Mammary epithelial cell (primary cell): ENCODE measurements at regions of chr14 and their contacts with region 1.

Region 1: GRCh38 chr14:80055667-80056496 is 155.4 kb downstream of the DIO2 start:
- DNase-seq: peak; percentile 32
- H3K4me3 ChIP-seq: no peak overlapping the region
- H3K27ac ChIP-seq: no peak overlapping the region
- H3K4me1 ChIP-seq: no peaks in the 10 kb centered on the region
- H3K27me3 ChIP-seq: no peaks in the 10 kb centered on the region
- CTCF ChIP-seq: peak; percentile 65 to 81

Region 2: GRCh38 chr14:78967110-78967809 is 1088.6 kb before region 1 on chr14:
- CTCF ChIA-PET with region 1: no interaction called
- dilution Hi-C with region 1: no loop called
- in situ Hi-C with region 1: no loop called
- intact Hi-C with region 1: loop called (anchors 5 kb)
- DNase-seq: no peak
- H3K4me3 ChIP-seq: no peak overlapping the region
- H3K27ac ChIP-seq: no peak overlapping the region
- H3K4me1 ChIP-seq: no peaks in the 10 kb centered on the region
- H3K27me3 ChIP-seq: no peaks in the 10 kb centered on the region
- CTCF ChIP-seq: no peak

Region 3: GRCh38 chr14:80213599-80213998 is 157.7 kb after region 1 on chr14:
- CTCF ChIA-PET with region 1: no interaction called
- dilution Hi-C with region 1: no loop called
- in situ Hi-C with region 1: no loop called
- intact Hi-C with region 1: loop called (anchors 1 kb)
- DNase-seq: peak; percentile 50
- H3K4me3 ChIP-seq: no peak overlapping the region
- H3K27ac ChIP-seq: no peak overlapping the region
- H3K4me1 ChIP-seq: no peaks in the 10 kb centered on the region
- H3K27me3 ChIP-seq: peaks cover 2% of the 10 kb centered on the region
- CTCF ChIP-seq: peak; percentile 81 to 82

Region 4: GRCh38 chr14:80364274-80364673 is 308.4 kb after region 1 on chr14:
- CTCF ChIA-PET with region 1: no interaction called
- dilution Hi-C with region 1: no loop called
- in situ Hi-C with region 1: loop called in 1 of 2 experiments (anchors 25 kb)
- intact Hi-C with region 1: loop called (anchors 1 kb)
- DNase-seq: no peak
- H3K4me3 ChIP-seq: no peak overlapping the region
- H3K27ac ChIP-seq: no peak overlapping the region
- H3K4me1 ChIP-seq: no peaks in the 10 kb centered on the region
- H3K27me3 ChIP-seq: no peaks in the 10 kb centered on the region
- CTCF ChIP-seq: peak; percentile 31 to 50

Region 5: DNA sequence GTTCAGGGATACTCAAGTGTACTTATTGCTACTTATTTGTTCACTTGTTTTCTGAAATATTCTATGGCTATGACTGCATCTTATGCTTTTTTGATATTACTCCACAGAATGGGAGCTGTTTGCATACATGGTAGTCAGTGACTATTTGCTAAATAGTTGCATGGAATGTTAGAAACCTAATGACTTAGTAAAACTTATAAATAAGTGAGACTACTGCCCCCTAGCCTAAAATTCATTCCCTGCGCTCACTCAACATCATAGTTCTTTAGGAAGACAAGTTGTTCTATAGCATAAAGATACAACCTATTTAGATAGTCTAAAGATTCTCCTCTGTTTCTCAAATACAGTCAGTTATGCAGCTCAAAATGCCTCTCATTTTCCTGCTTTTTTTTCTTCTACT is 580.2 kb after region 1 on chr14:
- CTCF ChIA-PET with region 1: no interaction called
- dilution Hi-C with region 1: no loop called
- in situ Hi-C with region 1: no loop called
- intact Hi-C with region 1: loop called (anchors 5 kb)
- DNase-seq: no peak
- H3K4me3 ChIP-seq: no peak overlapping the region
- H3K27ac ChIP-seq: no peak overlapping the region
- H3K4me1 ChIP-seq: peaks cover 20% of the 10 kb centered on the region
- H3K27me3 ChIP-seq: no peaks in the 10 kb centered on the region
- CTCF ChIP-seq: peak; percentile 33 to 46

Region 6: GRCh38 chr14:80987235-80988032 is 931.6 kb after region 1 on chr14:
- CTCF ChIA-PET with region 1: interaction called, 5 read pairs
- dilution Hi-C with region 1: no loop called
- in situ Hi-C with region 1: no loop called
- intact Hi-C with region 1: loop called (anchors 10 kb)
- DNase-seq: peak; percentile 68
- H3K4me3 ChIP-seq: no peak overlapping the region
- H3K27ac ChIP-seq: no peak overlapping the region
- H3K4me1 ChIP-seq: no peaks in the 10 kb centered on the region
- H3K27me3 ChIP-seq: no peaks in the 10 kb centered on the region
- CTCF ChIP-seq: peak; percentile 92 to 98